ENCODE measurements at regions of chr15 and their contacts with region 1.

Region 1: GRCh38 chr15:86115144-86115801 is 35.6 kb downstream of the AGBL1 start:
- DNase-seq: no peak
- H3K4me3 ChIP-seq: no peak overlapping the region
- H3K27ac ChIP-seq: no peak overlapping the region
- H3K4me1 ChIP-seq: no peaks in the 10 kb centered on the region
- H3K27me3 ChIP-seq: no peaks in the 10 kb centered on the region
- CTCF ChIP-seq: no peak
- EP300 ChIP-seq: no peak
- POLR2A ChIP-seq: no peak

Region 2: DNA sequence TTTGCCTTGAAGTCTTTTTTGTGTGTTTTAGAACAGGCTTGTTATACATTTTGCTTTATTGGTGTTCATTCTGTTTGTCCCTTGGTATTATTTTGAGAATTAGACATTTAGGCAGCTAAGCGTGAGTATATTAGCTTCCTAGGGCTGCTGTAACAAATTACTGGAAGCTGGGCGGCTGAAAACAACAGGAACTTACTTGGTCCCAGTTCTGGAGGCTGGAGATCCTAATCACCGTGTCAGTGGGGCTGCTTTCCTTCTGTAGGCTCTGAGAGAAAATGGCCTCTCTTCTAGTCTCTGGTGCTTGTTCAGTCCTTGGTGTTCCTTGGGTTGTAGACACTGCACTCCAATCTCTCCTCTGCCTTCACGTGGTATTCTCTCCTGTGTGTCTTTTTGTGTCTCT is 462.8 kb before region 1 on chr15:
- in situ Hi-C with region 1: no loop called
- intact Hi-C with region 1: loop called (anchors 10 kb)
- DNase-seq: no peak
- H3K4me3 ChIP-seq: no peak overlapping the region
- H3K27ac ChIP-seq: no peak overlapping the region
- H3K4me1 ChIP-seq: peaks cover 5 to 19% (median 7%) of the 10 kb centered on the region in 4 donors
- H3K27me3 ChIP-seq: no peaks in the 10 kb centered on the region
- CTCF ChIP-seq: no peak
- EP300 ChIP-seq: no peak
- POLR2A ChIP-seq: no peak

Measured in transverse colon (tissue), 4 donors.